GM23248 (cell line): ENCODE measurements at regions of chr1 and their contacts with region 1.

Region 1: DNA sequence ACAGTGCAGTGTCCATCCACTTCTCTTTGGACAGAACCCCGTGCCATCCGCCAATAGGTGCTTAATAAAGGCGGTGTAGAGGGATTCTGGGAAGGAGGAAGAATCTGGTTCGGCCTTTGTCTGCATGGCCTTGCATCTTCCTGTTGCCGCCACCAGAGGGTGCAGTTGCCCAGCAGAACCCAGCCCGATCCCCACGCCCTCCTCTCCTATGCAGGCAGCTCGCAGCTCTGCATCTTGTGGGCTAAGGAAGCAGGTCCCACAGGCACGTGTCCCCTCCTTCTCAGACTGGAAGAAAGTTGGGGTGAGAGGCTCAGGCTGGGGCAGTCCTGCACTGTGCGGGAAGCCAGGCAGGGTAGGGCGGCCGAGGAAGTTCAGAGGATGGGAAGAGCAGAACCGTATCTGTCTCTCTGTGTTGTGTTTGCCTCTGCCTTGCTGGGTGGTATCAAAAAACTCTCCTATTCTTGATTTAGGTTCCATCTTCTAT is 20.8 kb downstream of the NAV1 start:
- DNase-seq: peak; percentile 91
- H3K4me3 ChIP-seq: no peak overlapping the region
- H3K27ac ChIP-seq: peak overlapping the region; percentile 97
- H3K4me1 ChIP-seq: peaks cover 70% of the 10 kb centered on the region
- H3K27me3 ChIP-seq: no peaks in the 10 kb centered on the region

Region 2: GRCh38 chr1:201137579-201138310 is 422.0 kb before region 1 on chr1:
- in situ Hi-C with region 1: no loop called
- DNase-seq: peak; percentile 97
- H3K4me3 ChIP-seq: no peak overlapping the region
- H3K27ac ChIP-seq: peak overlapping the region; percentile 53
- H3K4me1 ChIP-seq: peaks cover 13% of the 10 kb centered on the region
- H3K27me3 ChIP-seq: no peaks in the 10 kb centered on the region

Region 3: GRCh38 chr1:201709564-201710295 is 150.0 kb after region 1 on chr1:
- in situ Hi-C with region 1: loop called (anchors 10 kb)
- DNase-seq: peak; percentile 85
- H3K4me3 ChIP-seq: no peak overlapping the region
- H3K27ac ChIP-seq: peak overlapping the region; percentile 99
- H3K4me1 ChIP-seq: peaks cover 76% of the 10 kb centered on the region
- H3K27me3 ChIP-seq: no peaks in the 10 kb centered on the region